ENCODE measurements at regions of chr5 and their contacts with region 1.

Region 1: GRCh38 chr5:57499262-57500050 is 16.8 kb upstream of the ACTBL2 start:
- DNase-seq: peak; percentile 28
- ATAC-seq: peak; percentile 67
- H3K4me3 Mint-ChIP-seq: peak overlapping the region; percentile 33
- H3K27ac Mint-ChIP-seq: no peak overlapping the region
- H3K4me1 Mint-ChIP-seq: peaks cover 27% of the 10 kb centered on the region
- H3K27me3 Mint-ChIP-seq: peaks cover 2% of the 10 kb centered on the region

Region 2: GRCh38 chr5:57383093-57383861 is 116.2 kb before region 1 on chr5:
- CTCF ChIA-PET with region 1: no interaction called
- POLR2A ChIA-PET with region 1: no interaction called
- intact Hi-C with region 1: loop called in 1 of 2 experiments (anchors 5 kb)
- DNase-seq: peak; percentile 72
- ATAC-seq: peak; percentile 97
- H3K4me3 Mint-ChIP-seq: no peak overlapping the region
- H3K27ac Mint-ChIP-seq: peak overlapping the region; percentile 4
- H3K4me1 Mint-ChIP-seq: peaks cover 17% of the 10 kb centered on the region
- H3K27me3 Mint-ChIP-seq: peaks cover 1% of the 10 kb centered on the region

Measured in activated CD4-positive, alpha-beta T cell treated with anti-CD3 and anti-CD28 coated beads for 36 hours (primary cell).